ENCODE measurements at regions of chr20 and their contacts with region 1.

Region 1: GRCh38 chr20:1764136-1765033 is 106.8 kb upstream of the SIRPG start:
- DNase-seq: peak; percentile 46
- ATAC-seq: peak; percentile 86
- H3K4me3 Mint-ChIP-seq: no peak overlapping the region
- H3K27ac Mint-ChIP-seq: no peak overlapping the region
- H3K4me1 Mint-ChIP-seq: peaks cover 2% of the 10 kb centered on the region
- H3K27me3 Mint-ChIP-seq: peaks cover 5% of the 10 kb centered on the region
- CTCF ChIP-seq: peak; percentile 45

Region 2: DNA sequence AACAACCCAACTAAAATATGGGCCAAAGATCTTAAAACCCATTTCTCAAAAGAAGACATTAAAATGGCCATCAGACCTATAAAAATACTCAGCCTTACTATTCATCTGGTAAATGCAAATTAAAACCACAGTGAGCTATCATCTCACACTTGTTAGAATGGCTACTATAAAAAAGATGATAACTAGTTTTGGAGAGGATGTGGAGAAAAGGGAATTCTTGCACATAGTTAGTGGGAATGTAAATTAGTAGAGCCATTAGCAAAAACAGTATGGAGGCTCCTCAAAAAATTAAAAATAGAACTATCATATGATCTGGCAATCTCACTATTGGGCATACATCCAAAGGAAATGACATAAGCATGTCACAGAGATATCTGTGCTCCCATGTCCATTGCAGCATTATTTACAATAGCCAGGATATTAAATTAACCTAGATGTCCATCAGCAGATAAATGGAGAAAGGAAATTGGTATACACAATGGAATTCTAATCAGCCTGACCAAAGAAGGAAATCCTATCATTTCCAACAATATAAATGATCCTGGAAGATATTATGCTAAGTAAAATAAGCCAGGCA is 147.4 kb before region 1 on chr20:
- CTCF ChIA-PET with region 1: no interaction called
- POLR2A ChIA-PET with region 1: no interaction called
- intact Hi-C with region 1: no loop called
- DNase-seq: no peak
- ATAC-seq: no peak
- H3K4me3 Mint-ChIP-seq: no peak overlapping the region
- H3K27ac Mint-ChIP-seq: no peak overlapping the region
- H3K4me1 Mint-ChIP-seq: peaks cover 43% of the 10 kb centered on the region
- H3K27me3 Mint-ChIP-seq: no peaks in the 10 kb centered on the region
- CTCF ChIP-seq: no peak

Region 3: GRCh38 chr20:2093159-2093781 is 328.9 kb after region 1 on chr20:
- CTCF ChIA-PET with region 1: interaction called, 13 read pairs
- POLR2A ChIA-PET with region 1: no interaction called
- intact Hi-C with region 1: loop called (anchors 1 kb)
- DNase-seq: no peak
- ATAC-seq: no peak
- H3K4me3 Mint-ChIP-seq: no peak overlapping the region
- H3K27ac Mint-ChIP-seq: no peak overlapping the region
- H3K4me1 Mint-ChIP-seq: peaks cover 5% of the 10 kb centered on the region
- H3K27me3 Mint-ChIP-seq: peaks cover 32% of the 10 kb centered on the region
- CTCF ChIP-seq: no peak

Region 4: GRCh38 chr20:2451939-2452732 is 687.8 kb after region 1 on chr20:
- CTCF ChIA-PET with region 1: interaction called, 8 read pairs
- POLR2A ChIA-PET with region 1: no interaction called
- intact Hi-C with region 1: loop called (anchors 1 kb)
- DNase-seq: peak; percentile 23
- ATAC-seq: peak; percentile 54
- H3K4me3 Mint-ChIP-seq: no peak overlapping the region
- H3K27ac Mint-ChIP-seq: no peak overlapping the region
- H3K4me1 Mint-ChIP-seq: peaks cover 2% of the 10 kb centered on the region
- H3K27me3 Mint-ChIP-seq: no peaks in the 10 kb centered on the region
- CTCF ChIP-seq: no peak

Measured in activated B cell treated with CpG ODN at 0.5 μM for 24 hours (primary cell).